Activated T-helper 1 cell treated with anti-CD3 and anti-CD28 coated beads, Interleukin-12 subunit alpha, Interleukin-12 subunit beta, Interleukin-2, Interleukin-4 antibody, amounts not matched to agents 30 ng/mL and 10 ng/mL and 1 ng/mL, durations not matched to agents 14 hours and 24 hours and 36 hours (primary cell): ENCODE measurements at regions of chrX and their contacts with region 1.

Region 1: GRCh38 chrX:15564981-15565579 is 35.7 kb downstream of the ACE2 start:
- DNase-seq: no peak
- H3K4me3 Mint-ChIP-seq: no peak overlapping the region
- H3K27ac Mint-ChIP-seq: no peak overlapping the region
- H3K4me1 Mint-ChIP-seq: no peaks in the 10 kb centered on the region
- H3K27me3 Mint-ChIP-seq: peaks cover 4% of the 10 kb centered on the region

Region 2: GRCh38 chrX:15328821-15329220 is 236.3 kb before region 1 on chrX:
- intact Hi-C with region 1: no loop called
- DNase-seq: no peak
- H3K4me3 Mint-ChIP-seq: no peak overlapping the region
- H3K27ac Mint-ChIP-seq: no peak overlapping the region
- H3K4me1 Mint-ChIP-seq: peaks cover 5% of the 10 kb centered on the region
- H3K27me3 Mint-ChIP-seq: no peaks in the 10 kb centered on the region

Region 3: DNA sequence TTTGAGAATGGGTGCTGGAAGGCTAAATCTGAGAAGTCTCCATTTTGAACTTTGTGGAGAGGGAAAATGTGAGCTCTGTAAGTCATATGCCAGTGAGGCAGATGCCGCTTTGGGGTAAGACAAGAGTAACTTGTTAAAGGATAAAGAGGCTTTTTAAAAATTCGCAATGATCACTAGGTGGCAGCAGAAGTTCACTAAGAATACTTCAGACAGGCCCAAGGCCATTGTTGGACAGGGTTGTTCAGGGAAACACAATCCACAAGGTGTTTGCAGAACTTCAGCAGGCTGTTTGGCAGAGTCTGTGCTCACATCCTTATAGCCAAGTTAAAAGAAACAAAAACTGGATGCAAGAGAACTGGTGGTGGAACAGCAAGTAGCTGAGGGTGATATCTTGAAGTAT is 216.0 kb before region 1 on chrX:
- intact Hi-C with region 1: loop called (anchors 1 kb)
- DNase-seq: no peak
- H3K4me3 Mint-ChIP-seq: no peak overlapping the region
- H3K27ac Mint-ChIP-seq: no peak overlapping the region
- H3K4me1 Mint-ChIP-seq: no peaks in the 10 kb centered on the region
- H3K27me3 Mint-ChIP-seq: no peaks in the 10 kb centered on the region